ENCODE measurements at regions of chr17 and their contacts with region 1.

Region 1: GRCh38 chr17:78497115-78497540 is 80.1 kb downstream of the DNAH17 start:
- DNase-seq: peak; percentile 87

Region 2: DNA sequence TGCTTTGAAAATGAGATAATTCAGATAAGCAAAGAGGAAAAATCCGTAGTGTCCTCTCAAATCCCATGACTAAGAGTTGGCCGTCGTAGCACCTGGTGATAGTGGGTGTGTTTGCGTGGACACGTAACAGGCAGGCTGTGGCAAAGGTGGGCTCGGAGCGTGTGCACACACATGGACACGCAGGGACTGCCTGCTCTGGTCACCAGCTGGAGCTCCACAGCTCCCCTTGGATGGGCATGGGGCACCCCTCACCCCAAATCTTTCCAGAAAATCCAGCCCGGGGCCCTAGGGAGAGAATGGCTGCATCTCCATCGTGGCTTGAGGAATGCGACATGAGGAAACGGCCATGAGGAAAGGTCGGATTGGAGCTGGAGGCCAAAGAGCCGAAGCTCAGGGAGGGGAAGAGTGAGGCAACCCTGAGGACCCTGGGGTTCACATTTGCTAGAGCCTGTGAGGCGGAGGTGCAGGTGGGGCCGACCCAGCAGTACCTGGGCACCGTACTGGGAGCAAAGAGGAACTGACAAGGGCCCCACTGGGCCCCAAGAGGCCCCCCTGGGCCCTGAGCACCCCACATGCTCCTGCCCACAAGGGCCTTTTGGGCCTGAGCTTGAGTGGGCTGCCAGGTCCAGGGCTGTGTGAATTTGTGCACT is 28.5 kb after region 1 on chr17:
- CTCF ChIA-PET with region 1: no interaction called
- POLR2A ChIA-PET with region 1: no interaction called
- DNase-seq: no peak

Region 3: GRCh38 chr17:78708510-78708973 is 211.4 kb after region 1 on chr17:
- CTCF ChIA-PET with region 1: interaction called, 21 read pairs
- POLR2A ChIA-PET with region 1: no interaction called
- DNase-seq: peak; percentile 83

Measured in HEK293T (cell line).